Activated CD4-positive, alpha-beta memory T cell treated with anti-CD3 and anti-CD28 coated beads for 36 hours (primary cell): ENCODE measurements at regions of chr2 and their contacts with region 1.

Region 1: GRCh38 chr2:224952936-224953657 is 89.2 kb downstream of the DOCK10 start:
- DNase-seq: peak; percentile 51
- H3K4me3 Mint-ChIP-seq: peak overlapping the region; percentile 24
- H3K27ac Mint-ChIP-seq: peak overlapping the region; percentile 87
- H3K4me1 Mint-ChIP-seq: peaks cover 87% of the 10 kb centered on the region
- H3K27me3 Mint-ChIP-seq: no peaks in the 10 kb centered on the region

Region 2: GRCh38 chr2:224938651-224939182 is 14.4 kb before region 1 on chr2:
- CTCF ChIA-PET with region 1: interaction called, 3 read pairs
- POLR2A ChIA-PET with region 1: interaction called, 8 read pairs
- intact Hi-C with region 1: loop called (anchors 1 kb)
- DNase-seq: peak; percentile 56
- H3K4me3 Mint-ChIP-seq: peak overlapping the region; percentile 67
- H3K27ac Mint-ChIP-seq: peak overlapping the region; percentile 79
- H3K4me1 Mint-ChIP-seq: peaks cover 80% of the 10 kb centered on the region
- H3K27me3 Mint-ChIP-seq: no peaks in the 10 kb centered on the region

Region 3: DNA sequence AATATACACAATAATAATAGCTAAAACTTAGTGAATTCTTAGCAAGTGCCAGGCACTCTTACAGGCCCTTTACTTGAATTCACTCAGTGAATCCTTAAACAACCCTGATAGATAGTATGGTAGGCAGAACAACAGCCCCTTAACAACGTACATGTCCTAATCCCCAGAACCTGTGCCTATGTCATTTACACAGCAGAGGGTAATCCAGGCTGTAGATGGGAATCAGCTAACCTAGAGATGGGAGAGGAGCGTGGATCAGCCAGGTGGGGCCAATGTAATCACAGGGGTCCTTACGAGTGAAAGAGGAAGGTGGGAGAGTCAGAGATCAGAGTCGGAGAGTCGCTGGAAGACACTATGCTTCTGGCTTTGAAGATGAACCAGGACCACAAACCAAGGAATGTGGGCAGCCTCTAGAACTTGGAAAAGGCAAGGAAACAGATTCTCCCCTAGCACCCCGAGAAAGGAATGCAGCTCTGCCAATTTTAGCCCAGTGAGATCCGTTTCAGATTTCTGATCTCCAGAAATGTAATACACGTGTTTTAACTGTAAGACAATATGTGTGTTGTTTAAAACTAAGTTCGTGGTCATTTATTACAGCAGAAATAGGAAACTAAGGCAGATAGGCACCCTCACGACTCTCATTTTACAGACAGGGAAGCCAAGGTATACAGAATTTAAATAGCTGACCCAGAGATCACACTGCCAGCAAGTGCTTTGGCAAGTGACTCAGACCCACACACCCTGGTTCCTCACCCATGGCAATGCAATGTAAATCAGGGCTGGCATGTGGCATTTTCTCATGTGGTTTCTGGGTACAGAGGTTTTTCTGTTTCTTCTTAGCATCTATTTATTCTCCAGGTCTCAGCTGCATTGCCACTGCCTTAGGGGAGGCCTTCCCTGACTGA is 20.3 kb after region 1 on chr2:
- CTCF ChIA-PET with region 1: interaction called, 3 read pairs
- POLR2A ChIA-PET with region 1: no interaction called
- intact Hi-C with region 1: loop called (anchors 1 kb)
- DNase-seq: peak; percentile 43
- H3K4me3 Mint-ChIP-seq: no peak overlapping the region
- H3K27ac Mint-ChIP-seq: peak overlapping the region; percentile 35
- H3K4me1 Mint-ChIP-seq: peaks cover 76% of the 10 kb centered on the region
- H3K27me3 Mint-ChIP-seq: no peaks in the 10 kb centered on the region

Region 4: DNA sequence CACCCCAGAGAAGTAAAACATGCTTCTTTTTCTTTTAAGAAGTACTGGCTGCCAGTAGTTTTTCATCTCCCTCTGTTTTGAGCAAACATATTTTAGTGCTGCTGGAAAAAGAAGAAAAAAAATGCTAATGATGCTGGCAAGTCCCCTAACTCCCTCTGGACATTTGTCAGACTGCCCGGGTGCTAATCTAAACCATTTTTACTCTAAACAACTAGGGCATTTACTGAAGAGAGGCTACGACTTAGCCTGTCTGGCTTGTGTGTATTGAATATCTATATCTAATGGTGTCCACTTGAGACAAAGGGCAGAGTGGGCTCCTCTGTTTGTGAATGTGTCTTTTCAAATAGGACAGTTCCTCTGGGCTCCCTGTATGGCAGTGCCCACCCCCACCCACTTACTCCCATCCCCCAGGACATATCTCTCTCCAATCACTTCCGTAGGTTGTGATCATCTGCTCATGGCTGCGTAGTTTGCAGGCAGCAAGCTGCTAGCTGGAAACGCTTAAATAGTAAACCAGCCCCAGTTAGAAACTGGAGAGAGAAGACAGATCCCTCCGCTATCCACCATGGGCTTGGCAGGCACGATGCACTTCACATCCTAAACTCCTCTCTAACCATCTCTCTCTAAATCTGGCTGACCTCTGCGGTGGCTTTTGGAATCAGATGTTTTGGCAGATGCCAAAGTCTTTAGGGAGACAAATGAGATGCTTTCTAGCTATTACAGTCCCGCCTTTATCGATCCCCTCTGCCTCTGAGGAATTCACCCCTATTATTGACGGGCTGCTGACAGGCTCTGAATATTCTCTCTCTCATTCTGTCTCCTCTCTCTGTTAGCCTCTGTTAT is 30.8 kb after region 1 on chr2:
- CTCF ChIA-PET with region 1: no interaction called
- POLR2A ChIA-PET with region 1: no interaction called
- intact Hi-C with region 1: no loop called
- DNase-seq: no peak
- H3K4me3 Mint-ChIP-seq: peak overlapping the region; percentile 58
- H3K27ac Mint-ChIP-seq: peak overlapping the region; percentile 71
- H3K4me1 Mint-ChIP-seq: peaks cover 76% of the 10 kb centered on the region
- H3K27me3 Mint-ChIP-seq: no peaks in the 10 kb centered on the region